ENCODE measurements at regions of chr11 and their contacts with region 1.

Region 1: DNA sequence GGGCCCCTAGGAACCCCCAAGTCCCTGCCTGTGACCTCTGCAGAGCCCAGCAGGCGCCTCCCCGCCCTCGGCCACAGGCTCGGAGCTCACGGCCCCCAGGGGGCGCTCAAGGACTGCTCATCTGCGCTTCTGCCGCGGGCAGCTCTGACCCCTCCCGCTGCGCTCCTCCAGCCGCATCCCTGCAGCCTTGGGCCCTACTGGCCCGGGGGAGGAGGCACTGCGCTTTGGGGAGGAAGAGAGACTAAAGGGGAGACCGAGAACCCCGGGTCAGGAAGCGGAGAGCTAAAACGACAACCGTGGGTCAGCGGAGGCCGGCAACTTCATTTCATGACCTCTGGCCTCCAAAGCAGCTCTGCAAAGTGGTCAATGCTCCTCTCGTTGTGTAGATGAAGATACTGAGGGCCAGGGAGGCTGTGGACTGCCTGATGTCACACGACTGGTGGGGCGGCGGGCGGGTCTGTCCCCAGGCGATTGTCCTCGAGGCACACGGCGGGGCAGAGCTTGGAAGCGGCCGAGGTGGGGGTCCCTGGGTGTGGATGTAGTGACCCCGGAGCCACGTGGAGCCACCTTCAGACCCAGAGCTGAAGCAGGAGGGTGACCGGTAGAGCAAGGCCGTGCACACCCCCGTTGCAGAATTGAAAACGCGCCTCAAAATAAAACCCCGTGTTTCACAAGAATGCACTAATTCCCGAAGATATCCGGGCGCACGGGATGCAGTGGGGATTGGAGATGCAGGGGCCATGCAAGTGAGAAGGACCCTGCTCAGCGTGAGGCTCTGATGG is 2.7 kb upstream of the KRTAP5-6 start:
- DNase-seq: peak; percentile 3
- H3K4me3 ChIP-seq: no peak overlapping the region
- CTCF ChIP-seq: peak; percentile 97

Region 2: DNA sequence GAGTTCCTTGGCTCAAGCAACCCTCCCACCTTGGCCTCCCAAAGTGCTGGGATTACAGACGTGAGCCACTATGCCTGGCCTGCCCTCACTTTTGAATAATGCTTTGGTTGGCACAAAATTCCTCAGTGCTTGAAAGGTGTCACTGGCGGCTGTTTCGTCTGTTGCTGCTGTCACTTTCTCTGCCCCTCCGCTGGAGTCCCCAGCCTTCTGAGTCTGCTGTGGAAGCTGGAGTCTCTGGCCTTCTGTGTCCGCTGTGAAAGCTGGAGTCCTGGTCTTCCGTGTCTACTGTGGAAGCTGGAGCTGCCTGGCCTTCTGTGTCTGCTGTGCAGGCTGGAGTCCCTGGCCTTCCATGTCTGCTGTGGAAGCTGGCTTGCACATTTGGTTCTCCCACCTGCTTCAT is 104.3 kb before region 1 on chr11:
- CTCF ChIA-PET with region 1: no interaction called
- POLR2A ChIA-PET with region 1: no interaction called
- DNase-seq: no peak
- H3K4me3 ChIP-seq: no peak overlapping the region
- CTCF ChIP-seq: no peak

Region 3: GRCh38 chr11:1706634-1707400 is 12.6 kb after region 1 on chr11:
- CTCF ChIA-PET with region 1: interaction called, 68 read pairs
- POLR2A ChIA-PET with region 1: no interaction called
- DNase-seq: no peak
- H3K4me3 ChIP-seq: no peak overlapping the region
- CTCF ChIP-seq: peak; percentile 2

Region 4: DNA sequence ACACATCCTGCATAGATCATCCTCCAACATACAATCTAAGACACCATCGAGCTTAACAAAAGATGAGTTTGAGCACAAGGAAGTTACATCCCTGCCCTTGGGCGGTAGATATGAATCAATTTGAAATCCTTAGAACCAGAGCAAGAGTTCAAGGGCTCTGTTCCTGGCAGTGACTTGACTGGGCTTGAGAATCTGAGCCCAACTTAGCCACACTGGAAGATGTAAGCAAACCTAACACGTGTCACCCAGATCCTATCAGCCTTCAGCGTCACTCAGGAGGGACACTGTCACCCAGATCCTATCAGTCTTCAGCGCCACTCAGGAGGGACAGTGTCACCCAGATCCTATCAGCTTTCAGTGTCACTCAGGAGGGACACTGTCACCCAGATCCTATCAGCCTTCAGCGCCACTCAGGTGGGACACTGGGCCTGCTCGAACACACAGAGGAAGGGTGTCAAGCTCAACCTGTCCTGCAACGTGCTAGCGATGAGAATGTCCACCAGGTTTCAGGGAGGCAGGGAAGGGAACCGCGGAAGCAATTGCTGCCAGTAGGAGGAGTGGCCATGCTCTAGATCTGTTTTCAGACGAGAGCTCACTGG is 102.3 kb after region 1 on chr11:
- CTCF ChIA-PET with region 1: interaction called, 11 read pairs
- POLR2A ChIA-PET with region 1: no interaction called
- DNase-seq: no peak
- H3K4me3 ChIP-seq: no peak overlapping the region
- CTCF ChIP-seq: no peak

Region 5: GRCh38 chr11:1832211-1832919 is 138.1 kb after region 1 on chr11:
- CTCF ChIA-PET with region 1: interaction called, 671 read pairs
- POLR2A ChIA-PET with region 1: interaction called, 7 read pairs
- DNase-seq: no peak
- H3K4me3 ChIP-seq: no peak overlapping the region
- CTCF ChIP-seq: peak; percentile 99

Region 6: GRCh38 chr11:1863352-1864216 is 169.3 kb after region 1 on chr11:
- CTCF ChIA-PET with region 1: interaction called, 24 read pairs
- POLR2A ChIA-PET with region 1: no interaction called
- DNase-seq: peak; percentile 40
- H3K4me3 ChIP-seq: no peak overlapping the region
- CTCF ChIP-seq: no peak

Region 7: GRCh38 chr11:1921574-1922141 is 227.4 kb after region 1 on chr11:
- CTCF ChIA-PET with region 1: interaction called, 12 read pairs
- POLR2A ChIA-PET with region 1: no interaction called
- DNase-seq: no peak
- H3K4me3 ChIP-seq: no peak overlapping the region
- CTCF ChIP-seq: no peak